H1 (cell line): ENCODE measurements at regions of chr17 and their contacts with region 1.

Region 1: GRCh38 chr17:62637809-62638208 is 10.3 kb downstream of the MRC2 start:
- DNase-seq: no peak
- H3K4me3 ChIP-seq: no peak overlapping the region
- H3K27ac ChIP-seq: no peak overlapping the region
- H3K4me1 ChIP-seq: peaks cover 0 to under 1% (median under 1%) of the 10 kb centered on the region in 4 experiments; a peak in 5 of 7 replicates
- H3K27me3 ChIP-seq: no peaks in the 10 kb centered on the region
- CTCF ChIP-seq: peak; percentile 36 to 52 (median 47); a peak in 3 of 4 replicates
- EP300 ChIP-seq: no peak
- POLR2A ChIP-seq: no peak
- RAD21 ChIP-seq: peak; percentile 42 to 49; a peak in 3 of 4 replicates

Region 2: DNA sequence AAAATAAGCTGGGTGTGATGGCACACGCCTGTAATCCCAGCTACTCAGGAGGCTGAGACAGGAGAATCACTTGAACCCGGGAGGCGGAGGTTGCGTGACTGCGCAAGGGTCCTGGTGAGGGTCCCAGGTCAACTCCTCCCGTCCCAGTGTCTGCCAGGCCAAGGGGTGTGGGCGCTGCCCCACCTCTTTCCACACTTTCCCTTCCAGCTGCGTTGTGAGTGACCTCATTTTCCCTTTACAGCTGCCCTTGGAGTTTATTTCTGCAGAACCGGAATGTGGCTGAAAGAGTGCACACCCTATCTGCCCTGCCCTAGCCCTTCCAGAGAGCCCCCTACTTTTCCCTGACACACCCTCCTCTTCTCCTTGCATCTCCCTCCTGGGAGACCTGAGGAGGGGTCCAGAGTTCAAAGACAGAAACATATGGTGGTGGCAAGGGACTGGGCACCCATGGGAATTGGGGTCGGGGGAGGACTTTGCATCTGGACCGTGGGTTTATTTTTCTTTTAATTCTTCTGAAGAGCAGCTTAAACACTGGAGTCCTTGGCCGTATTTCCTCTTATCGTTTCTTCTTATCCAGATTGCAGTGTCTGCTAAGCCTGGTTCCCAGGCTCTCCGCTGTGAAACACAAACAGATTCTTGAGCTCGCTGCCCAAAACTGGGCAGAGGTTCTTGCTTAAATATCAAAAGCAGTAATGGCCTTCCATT is 10.6 kb after region 1 on chr17:
- CTCF ChIA-PET with region 1: interaction called, 12 read pairs
- POLR2A ChIA-PET with region 1: interaction called, 4 read pairs
- DNase-seq: no peak
- H3K4me3 ChIP-seq: no peak overlapping the region
- H3K27ac ChIP-seq: no peak overlapping the region
- H3K4me1 ChIP-seq: peaks cover 0 to 14% (median 3%) of the 10 kb centered on the region in 4 experiments; a peak in 6 of 7 replicates
- H3K27me3 ChIP-seq: peaks cover 0 to 6% (median 3%) of the 10 kb centered on the region in 4 experiments; a peak in 1 of 7 replicates
- CTCF ChIP-seq: no peak
- EP300 ChIP-seq: no peak
- POLR2A ChIP-seq: no peak
- RAD21 ChIP-seq: no peak

Region 3: GRCh38 chr17:62656446-62656845 is 18.6 kb after region 1 on chr17:
- CTCF ChIA-PET with region 1: interaction called, 11 read pairs
- POLR2A ChIA-PET with region 1: interaction called, 3 read pairs
- DNase-seq: no peak
- H3K4me3 ChIP-seq: no peak overlapping the region
- H3K27ac ChIP-seq: no peak overlapping the region
- H3K4me1 ChIP-seq: peaks cover 0 to 16% (median 12%) of the 10 kb centered on the region in 4 experiments; a peak in 6 of 7 replicates
- H3K27me3 ChIP-seq: peaks cover 0 to 6% (median 3%) of the 10 kb centered on the region in 4 experiments; a peak in 1 of 7 replicates
- CTCF ChIP-seq: no peak
- EP300 ChIP-seq: no peak
- POLR2A ChIP-seq: no peak
- RAD21 ChIP-seq: no peak

Region 4: GRCh38 chr17:62671583-62672312 is 33.9 kb after region 1 on chr17:
- CTCF ChIA-PET with region 1: interaction called, 15 read pairs
- POLR2A ChIA-PET with region 1: no interaction called
- DNase-seq: no peak
- H3K4me3 ChIP-seq: no peak overlapping the region
- H3K27ac ChIP-seq: no peak overlapping the region
- H3K4me1 ChIP-seq: no peaks in the 10 kb centered on the region; a peak in 2 of 7 replicates
- H3K27me3 ChIP-seq: no peaks in the 10 kb centered on the region
- CTCF ChIP-seq: no peak
- EP300 ChIP-seq: no peak
- POLR2A ChIP-seq: no peak
- RAD21 ChIP-seq: peak in 1 of 2 experiments; percentile 21; a peak in 1 of 4 replicates

Region 5: DNA sequence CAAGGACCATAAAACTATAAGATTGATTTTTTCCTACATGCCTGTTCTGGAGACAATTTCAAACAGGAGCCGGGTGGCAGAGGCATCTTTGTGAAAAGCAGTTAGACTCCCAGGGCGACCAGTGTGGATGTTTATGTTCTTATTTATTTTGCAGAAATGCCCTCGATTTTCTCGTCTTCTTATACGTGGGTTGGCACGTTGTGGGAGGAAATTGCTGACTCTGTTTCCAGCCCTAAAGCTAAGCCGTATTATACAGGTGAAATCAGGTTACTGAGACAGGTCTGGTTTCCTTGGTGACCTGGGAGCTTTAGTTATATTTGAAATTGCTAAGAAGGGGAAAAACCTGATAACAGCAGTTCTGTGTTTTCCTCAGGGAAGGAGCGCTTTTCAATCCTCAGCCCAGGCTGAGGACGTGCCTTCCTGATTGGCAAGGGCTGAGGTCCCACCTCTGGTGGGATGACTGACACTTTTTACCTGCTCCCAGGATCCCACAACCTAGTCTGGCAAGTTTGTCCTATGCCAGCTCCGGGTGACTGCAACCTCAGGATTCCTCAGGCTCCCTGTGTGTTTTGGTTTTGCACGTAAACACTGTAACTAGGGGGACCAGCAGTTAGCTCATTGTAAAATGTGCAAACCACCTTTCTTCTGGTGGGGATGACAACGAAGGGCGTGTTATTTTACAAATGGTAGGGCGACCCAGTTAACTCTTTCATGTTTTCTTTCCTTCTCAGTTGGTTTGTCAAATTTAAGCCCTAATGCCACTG is 162.7 kb after region 1 on chr17:
- CTCF ChIA-PET with region 1: no interaction called
- POLR2A ChIA-PET with region 1: no interaction called
- DNase-seq: peak in 1 of 2 experiments; percentile 41
- H3K4me3 ChIP-seq: no peak overlapping the region
- H3K27ac ChIP-seq: no peak overlapping the region
- H3K4me1 ChIP-seq: peaks cover 0 to 7% (median 0%) of the 10 kb centered on the region in 4 experiments; a peak in 1 of 7 replicates
- H3K27me3 ChIP-seq: no peaks in the 10 kb centered on the region
- CTCF ChIP-seq: no peak
- EP300 ChIP-seq: no peak
- POLR2A ChIP-seq: no peak
- RAD21 ChIP-seq: no peak